Activated CD4-positive, alpha-beta memory T cell treated with anti-CD3 and anti-CD28 coated beads for 36 hours (primary cell): ENCODE measurements at regions of chr9 and their contacts with region 1.

Region 1: GRCh38 chr9:35096035-35096849 is at the start of gene PIGO:
- DNase-seq: peak; percentile 93
- H3K4me3 Mint-ChIP-seq: peak within 1 kb of the TSS; percentile 84
- H3K27ac Mint-ChIP-seq: peak within 1 kb of the TSS; percentile 93
- H3K4me1 Mint-ChIP-seq: peaks cover 27% of the 10 kb centered on the region
- H3K27me3 Mint-ChIP-seq: no peaks in the 10 kb centered on the region
- total RNA-seq, gene PIGO: 19.3 to 20.9 TPM

Region 2: GRCh38 chr9:35035851-35036701 is 60.2 kb before region 1 on chr9:
- CTCF ChIA-PET with region 1: no interaction called
- POLR2A ChIA-PET with region 1: no interaction called
- intact Hi-C with region 1: no loop called
- DNase-seq: peak; percentile 71
- H3K4me3 Mint-ChIP-seq: peak overlapping the region; percentile 36
- H3K27ac Mint-ChIP-seq: peak overlapping the region; percentile 18
- H3K4me1 Mint-ChIP-seq: peaks cover 9% of the 10 kb centered on the region
- H3K27me3 Mint-ChIP-seq: no peaks in the 10 kb centered on the region

Region 3: GRCh38 chr9:35051069-35051967 is 44.9 kb before region 1 on chr9:
- CTCF ChIA-PET with region 1: interaction called, 22 read pairs
- POLR2A ChIA-PET with region 1: interaction called, 4 read pairs
- intact Hi-C with region 1: no loop called
- DNase-seq: peak; percentile 63
- H3K4me3 Mint-ChIP-seq: no peak overlapping the region
- H3K27ac Mint-ChIP-seq: no peak overlapping the region
- H3K4me1 Mint-ChIP-seq: no peaks in the 10 kb centered on the region
- H3K27me3 Mint-ChIP-seq: no peaks in the 10 kb centered on the region

Region 4: DNA sequence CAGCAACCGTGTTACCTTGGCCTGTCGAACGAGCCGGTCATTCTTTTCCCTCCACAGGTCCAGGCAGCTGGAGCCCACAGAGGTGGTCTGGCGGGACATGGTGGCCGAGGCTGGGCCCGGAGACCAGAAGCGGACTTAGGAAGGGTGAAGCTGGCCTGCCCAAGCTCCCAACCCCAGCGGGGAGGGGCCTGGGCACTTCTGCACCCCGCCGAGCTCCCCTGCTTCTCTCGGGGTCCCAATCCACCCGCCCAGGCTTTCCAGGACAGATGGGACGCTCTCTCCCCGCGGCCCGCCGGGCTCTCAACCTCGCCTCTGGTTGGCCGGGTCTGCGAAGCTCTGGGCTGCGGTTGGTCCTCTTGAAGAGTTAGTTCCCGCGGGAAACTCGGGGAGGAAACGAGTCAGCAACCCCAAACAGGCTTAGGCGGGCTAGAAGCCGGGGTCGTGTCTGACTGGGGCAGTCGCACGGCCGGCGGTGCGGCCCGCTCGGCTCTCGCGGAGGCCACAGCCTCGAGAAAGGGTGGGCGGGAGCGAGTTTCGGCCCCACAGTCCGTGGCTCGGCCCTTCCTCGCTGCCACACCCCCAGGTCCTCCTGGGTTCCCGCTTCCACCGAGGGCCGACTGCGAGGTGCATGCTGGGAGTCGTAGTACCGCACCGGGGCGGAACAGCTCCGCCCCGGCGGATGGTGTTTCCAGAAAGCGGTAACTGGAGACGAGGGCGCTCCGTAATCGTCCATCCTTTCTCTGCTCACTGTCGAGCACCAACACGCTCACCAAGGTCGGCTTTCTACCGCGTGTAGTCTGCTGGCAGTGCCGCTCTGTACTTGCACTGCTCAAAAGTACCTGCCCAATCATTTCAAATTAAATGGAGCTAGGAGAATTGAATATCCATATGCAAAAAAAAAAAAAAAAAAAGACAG is 16.6 kb before region 1 on chr9 and contains the start of gene FANCG:
- CTCF ChIA-PET with region 1: interaction called, 40 read pairs
- POLR2A ChIA-PET with region 1: interaction called, 16 read pairs
- intact Hi-C with region 1: loop called (anchors 1 kb)
- DNase-seq: peak; percentile 91
- H3K4me3 Mint-ChIP-seq: peak within 1 kb of the TSS; percentile 92
- H3K27ac Mint-ChIP-seq: peak within 1 kb of the TSS; percentile 98
- H3K4me1 Mint-ChIP-seq: peaks cover 16% of the 10 kb centered on the region
- H3K27me3 Mint-ChIP-seq: no peaks in the 10 kb centered on the region
- total RNA-seq, gene FANCG: 103 to 107 TPM

Region 5: DNA sequence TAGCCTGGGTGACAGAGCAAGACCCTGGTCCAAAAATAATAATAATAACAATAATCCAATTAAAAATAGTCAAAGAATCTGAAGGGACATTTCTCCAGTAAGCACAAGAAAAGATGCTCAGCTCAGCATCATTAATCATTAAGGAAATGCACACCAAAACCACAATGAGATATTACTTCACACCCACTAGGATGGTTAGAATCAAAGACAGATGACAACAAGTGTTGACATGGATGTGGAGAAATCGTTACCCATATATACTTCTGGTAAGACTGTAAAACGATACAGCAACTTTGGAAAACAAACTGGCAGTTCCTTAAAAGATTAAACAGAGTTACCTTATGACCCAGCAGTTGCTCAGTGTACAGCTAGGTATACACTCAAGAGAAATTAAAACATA is 11.2 kb before region 1 on chr9:
- CTCF ChIA-PET with region 1: interaction called, 40 read pairs
- POLR2A ChIA-PET with region 1: interaction called, 16 read pairs
- intact Hi-C with region 1: loop called (anchors 1 kb)
- DNase-seq: no peak
- H3K4me3 Mint-ChIP-seq: no peak overlapping the region
- H3K27ac Mint-ChIP-seq: no peak overlapping the region
- H3K4me1 Mint-ChIP-seq: peaks cover 1% of the 10 kb centered on the region
- H3K27me3 Mint-ChIP-seq: no peaks in the 10 kb centered on the region

Region 6: DNA sequence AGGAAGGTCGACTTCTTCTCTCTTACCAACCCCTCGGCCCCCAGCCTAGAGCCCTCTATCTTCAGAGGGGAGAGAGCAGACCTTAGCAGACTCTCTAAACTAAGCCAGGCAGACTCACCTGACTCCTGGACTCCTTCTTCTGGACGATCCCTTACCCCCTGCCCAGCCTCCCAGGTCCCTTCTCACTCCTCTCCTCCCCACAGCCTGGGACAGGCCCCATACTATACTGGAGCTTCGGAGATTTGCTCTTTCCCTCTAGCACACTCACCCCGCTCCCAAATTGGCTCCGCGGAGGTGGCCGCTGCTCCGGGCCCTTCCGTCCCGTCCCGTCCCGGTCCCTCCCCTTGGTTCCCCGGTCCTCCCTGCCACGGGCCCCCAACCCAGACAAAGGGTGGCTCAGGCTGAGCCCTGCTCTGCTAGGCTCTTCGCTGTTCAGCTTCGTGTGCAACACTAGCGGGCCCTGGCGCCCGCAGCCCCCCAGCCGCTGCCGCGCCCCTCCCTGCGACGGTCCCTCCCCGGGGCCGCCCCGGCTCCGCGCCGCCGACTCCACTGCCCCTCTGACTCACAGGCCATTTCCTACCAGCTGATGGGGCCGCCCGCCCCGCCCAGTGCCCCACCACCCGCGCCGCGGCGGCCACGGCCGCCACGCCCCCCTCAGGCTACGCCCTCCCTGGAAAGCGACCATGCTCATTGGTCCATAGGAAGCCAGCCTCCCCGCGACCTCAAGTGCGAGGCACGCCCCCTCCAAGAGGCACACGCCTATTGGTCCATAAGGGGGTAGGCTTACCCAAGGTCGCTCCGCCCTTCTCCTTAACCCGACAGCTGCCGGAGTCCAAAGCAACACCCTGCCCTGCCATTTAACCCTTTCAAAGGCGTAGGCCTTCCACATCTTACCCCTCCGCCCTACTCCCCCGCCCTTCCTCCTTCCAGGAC is 15.0 kb after region 1 on chr9:
- CTCF ChIA-PET with region 1: interaction called, 26 read pairs
- POLR2A ChIA-PET with region 1: interaction called, 6 read pairs
- intact Hi-C with region 1: loop called (anchors 1 kb)
- DNase-seq: peak; percentile 98
- H3K4me3 Mint-ChIP-seq: peak overlapping the region; percentile 75
- H3K27ac Mint-ChIP-seq: peak overlapping the region; percentile 81
- H3K4me1 Mint-ChIP-seq: peaks cover 42% of the 10 kb centered on the region
- H3K27me3 Mint-ChIP-seq: no peaks in the 10 kb centered on the region